ENCODE measurements at regions of chr12 and their contacts with region 1.

Region 1: GRCh38 chr12:110893956-110894355 is 26.4 kb downstream of the MYL2 start:
- DNase-seq: no peak
- H3K4me3 ChIP-seq: no peak overlapping the region
- H3K27ac ChIP-seq: no peak overlapping the region
- H3K4me1 ChIP-seq: no peaks in the 10 kb centered on the region; a peak in 1 of 4 replicates
- H3K27me3 ChIP-seq: no peaks in the 10 kb centered on the region; the same call in 1 of the 2 replicates
- CTCF ChIP-seq: no peak
- EP300 ChIP-seq: no peak
- RAD21 ChIP-seq: no peak

Region 2: GRCh38 chr12:110880648-110881047 is 13.3 kb before region 1 on chr12:
- CTCF ChIA-PET with region 1: interaction called, 11 read pairs
- POLR2A ChIA-PET with region 1: no interaction called
- DNase-seq: no peak
- H3K4me3 ChIP-seq: no peak overlapping the region
- H3K27ac ChIP-seq: no peak overlapping the region
- H3K4me1 ChIP-seq: 0 out of 4 replicates have a peak, but pooled peaks cover 0 to 4% of the 10 kb centered on the region in 2 experiments
- H3K27me3 ChIP-seq: no peaks in the 10 kb centered on the region
- CTCF ChIP-seq: no peak
- EP300 ChIP-seq: no peak
- RAD21 ChIP-seq: no peak

Region 3: DNA sequence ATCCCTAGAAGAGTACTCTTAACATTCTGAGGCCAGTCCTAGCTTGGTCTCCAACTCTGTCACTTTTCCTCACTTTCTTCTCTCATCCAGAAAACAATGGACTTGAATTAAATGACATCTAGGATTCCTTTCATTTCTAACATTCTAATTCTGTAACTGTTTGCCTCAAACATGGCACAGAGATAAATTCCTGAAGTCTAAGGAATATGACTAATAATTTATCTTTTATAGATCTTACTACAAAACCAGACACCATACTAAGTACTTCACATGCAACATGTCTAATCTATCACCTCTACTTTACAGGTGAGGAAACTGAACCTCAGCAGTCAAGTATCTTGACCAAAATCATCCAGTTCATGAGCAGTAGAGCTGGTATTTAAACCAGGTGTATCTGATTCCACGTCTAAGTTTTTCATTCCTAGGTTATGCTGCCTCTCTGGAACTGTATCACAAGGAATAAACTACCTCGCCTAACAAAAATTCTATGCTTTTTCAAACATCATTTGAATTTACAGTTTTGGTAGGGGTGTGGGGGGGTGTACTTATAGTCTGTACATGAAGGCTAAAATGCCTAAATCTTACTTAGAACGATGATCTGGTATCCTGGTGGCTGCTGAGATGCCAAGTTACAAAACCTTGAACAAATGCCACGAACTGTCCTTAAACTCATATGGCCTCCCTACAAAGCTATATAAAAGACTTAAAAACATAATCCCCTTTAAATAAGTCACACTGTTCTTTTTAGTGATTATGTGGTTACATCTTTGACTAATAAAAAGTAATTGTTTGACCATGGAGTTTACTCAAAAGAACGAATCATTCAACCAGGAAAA is 663.5 kb after region 1 on chr12:
- CTCF ChIA-PET with region 1: no interaction called
- POLR2A ChIA-PET with region 1: no interaction called
- DNase-seq: no peak
- H3K4me3 ChIP-seq: no peak overlapping the region
- H3K27ac ChIP-seq: peak overlapping the region; percentile 11 to 73; a peak in 3 of 4 replicates
- H3K4me1 ChIP-seq: peaks cover 0 to 27% of the 10 kb centered on the region in 2 experiments; a peak in 2 of 4 replicates
- H3K27me3 ChIP-seq: no peaks in the 10 kb centered on the region
- CTCF ChIP-seq: no peak
- EP300 ChIP-seq: peak in 1 of 2 experiments; percentile 50; a peak in 1 of 4 replicates
- RAD21 ChIP-seq: no peak